Esophagus muscularis mucosa (tissue), 4 donors: ENCODE measurements at regions of chr13 and their contacts with region 1.

Region 1: GRCh38 chr13:45464687-45465453 is at the start of gene COG3:
- DNase-seq: peak; percentile 98
- H3K4me3 ChIP-seq: peak within 1 kb of the TSS; percentile 70 to 89 (median 80)
- H3K27ac ChIP-seq: peak within 1 kb of the TSS; percentile 86 to 96 (median 90)
- H3K4me1 ChIP-seq: peaks cover 22 to 44% (median 38%) of the 10 kb centered on the region in 4 donors
- H3K27me3 ChIP-seq: no peaks in the 10 kb centered on the region
- CTCF ChIP-seq: peak in 1 of 3 experiments; percentile 44
- EP300 ChIP-seq: no peak
- POLR2A ChIP-seq: peak; percentile 62
- total RNA-seq, gene COG3: 17.7 to 28.2 (median 21.3) TPM

Region 2: DNA sequence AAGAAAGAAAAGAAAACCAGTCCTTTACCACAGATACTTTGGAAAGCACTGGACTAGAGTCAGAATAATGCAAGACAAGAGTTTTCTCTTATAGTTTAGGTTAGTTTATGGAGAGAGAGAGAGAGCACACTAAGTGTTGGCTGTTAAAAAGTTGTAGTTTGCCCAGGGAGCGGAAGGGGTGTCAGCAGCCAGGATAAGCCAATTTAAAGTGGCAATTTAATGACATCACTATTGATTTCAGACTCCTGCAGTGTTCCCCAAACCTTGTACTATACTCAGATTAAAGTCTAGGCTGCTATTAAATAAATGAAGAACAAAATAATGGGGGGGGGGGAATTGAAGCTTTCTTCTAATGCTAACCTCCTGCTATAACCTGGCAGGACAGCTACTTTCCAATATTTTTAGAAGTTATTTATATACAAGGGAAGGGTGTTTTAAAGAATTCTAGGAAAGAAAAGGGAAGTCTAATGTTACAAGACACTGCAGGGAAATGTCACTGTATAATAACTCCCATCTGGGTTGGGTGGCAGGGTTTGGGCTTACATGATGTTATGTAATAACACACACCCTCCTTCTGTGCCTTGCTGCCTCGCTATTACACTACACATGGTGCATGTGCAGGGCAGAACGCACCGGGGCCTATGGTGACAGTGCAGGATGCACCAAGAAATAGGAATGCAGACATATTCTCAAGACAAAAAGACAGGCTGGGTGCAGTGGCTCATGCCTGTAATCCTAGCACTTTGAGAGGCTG is 143.8 kb before region 1 on chr13:
- intact Hi-C with region 1: no loop called
- DNase-seq: no peak
- H3K4me3 ChIP-seq: no peak overlapping the region
- H3K27ac ChIP-seq: no peak overlapping the region
- H3K4me1 ChIP-seq: peaks cover 8 to 16% (median 12%) of the 10 kb centered on the region in 4 donors
- H3K27me3 ChIP-seq: no peaks in the 10 kb centered on the region
- CTCF ChIP-seq: no peak
- EP300 ChIP-seq: no peak
- POLR2A ChIP-seq: no peak

Region 3: DNA sequence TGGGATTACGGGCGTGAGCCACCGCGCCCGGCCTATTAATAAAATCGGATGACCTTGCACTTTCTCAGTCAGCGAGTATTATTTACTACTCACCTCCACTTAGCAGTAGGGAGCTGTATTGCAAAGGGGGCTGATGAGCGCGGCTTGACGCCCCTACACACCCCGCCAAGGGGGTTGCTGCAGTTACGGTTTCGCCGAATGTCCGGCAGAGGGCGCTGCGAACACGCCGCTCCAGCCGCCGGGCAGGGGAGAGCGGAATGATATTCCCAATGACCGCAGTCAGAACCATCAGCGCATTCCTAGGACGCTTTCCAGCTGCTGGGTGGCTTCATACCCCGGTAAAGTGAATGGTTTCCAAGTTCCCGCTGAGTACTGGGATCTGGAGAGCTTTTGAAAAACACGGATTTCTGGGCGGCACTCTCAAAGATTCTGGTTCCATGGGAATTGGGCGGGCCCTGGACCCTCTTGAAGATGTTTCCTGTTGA is 93.9 kb before region 1 on chr13:
- intact Hi-C with region 1: loop called (anchors 5 kb)
- DNase-seq: no peak
- H3K4me3 ChIP-seq: peak overlapping the region; percentile 3 to 39 (median 21)
- H3K27ac ChIP-seq: peak overlapping the region in 2 of 4 donors; percentile 35 to 36
- H3K4me1 ChIP-seq: peaks cover 15 to 24% (median 17%) of the 10 kb centered on the region in 4 donors
- H3K27me3 ChIP-seq: no peaks in the 10 kb centered on the region
- CTCF ChIP-seq: peak in 2 of 3 experiments; percentile 78 to 91
- EP300 ChIP-seq: no peak
- POLR2A ChIP-seq: no peak

Region 4: DNA sequence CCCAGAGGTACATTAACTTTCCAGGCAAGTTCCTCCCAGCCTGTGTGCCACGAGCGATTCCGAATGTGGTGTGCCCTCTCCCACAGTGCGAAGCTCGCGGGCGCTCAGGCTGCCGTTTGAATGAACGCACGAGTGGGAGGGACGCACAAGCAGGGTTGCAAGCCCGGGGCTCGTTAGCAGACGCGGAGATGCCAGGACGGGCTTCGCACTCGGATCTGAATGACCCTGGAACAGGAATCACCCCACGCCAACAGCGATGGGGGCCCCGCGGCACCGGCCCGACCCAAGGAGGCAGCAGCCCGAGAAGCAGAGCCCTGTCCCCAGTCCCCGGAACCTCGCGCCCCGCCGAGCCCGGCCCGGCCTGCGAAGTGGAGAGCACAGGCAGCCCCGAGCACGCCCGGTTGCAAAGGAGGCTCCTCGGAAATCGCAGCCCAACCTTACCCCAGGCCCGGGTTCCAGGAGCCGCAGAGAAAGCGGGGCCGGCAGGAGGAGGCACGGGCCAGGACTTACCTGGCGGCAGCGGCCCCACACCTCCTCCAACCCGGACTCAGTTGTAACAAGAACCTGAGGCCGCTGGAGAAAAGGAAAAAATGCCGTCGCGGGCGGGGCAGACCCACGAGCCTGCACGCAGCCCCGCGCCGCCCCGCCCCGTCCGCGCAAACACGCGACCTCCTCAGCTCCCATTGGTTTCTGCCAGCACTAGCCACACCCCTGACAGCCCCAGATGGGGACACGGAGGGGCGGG is 46.9 kb before region 1 on chr13 and contains the start of gene SLC25A30:
- intact Hi-C with region 1: loop called (anchors 2 kb)
- DNase-seq: peak; percentile 98
- H3K4me3 ChIP-seq: peak within 1 kb of the TSS; percentile 60 to 79 (median 71)
- H3K27ac ChIP-seq: peak within 1 kb of the TSS; percentile 89 to 93 (median 90)
- H3K4me1 ChIP-seq: peaks cover 15 to 43% (median 30%) of the 10 kb centered on the region in 4 donors
- H3K27me3 ChIP-seq: no peaks in the 10 kb centered on the region
- CTCF ChIP-seq: no peak
- EP300 ChIP-seq: no peak
- POLR2A ChIP-seq: no peak
- total RNA-seq, gene SLC25A30: 8.8 to 13.4 (median 10.3) TPM